ENCODE measurements at regions of chr20 and their contacts with region 1.

Region 1: GRCh38 chr20:14337400-14338171 is at the start of gene FLRT3:
- DNase-seq: peak; percentile 67 to 84
- H3K4me3 ChIP-seq: peak within 1 kb of the TSS; percentile 65
- H3K27ac ChIP-seq: no peak within 1 kb of the TSS
- H3K4me1 ChIP-seq: no peaks in the 10 kb centered on the region
- H3K27me3 ChIP-seq: no peaks in the 10 kb centered on the region
- CTCF ChIP-seq: peak; percentile 80
- total RNA-seq, gene FLRT3: 0.70 and 0.95 TPM in 2 replicates

Region 2: DNA sequence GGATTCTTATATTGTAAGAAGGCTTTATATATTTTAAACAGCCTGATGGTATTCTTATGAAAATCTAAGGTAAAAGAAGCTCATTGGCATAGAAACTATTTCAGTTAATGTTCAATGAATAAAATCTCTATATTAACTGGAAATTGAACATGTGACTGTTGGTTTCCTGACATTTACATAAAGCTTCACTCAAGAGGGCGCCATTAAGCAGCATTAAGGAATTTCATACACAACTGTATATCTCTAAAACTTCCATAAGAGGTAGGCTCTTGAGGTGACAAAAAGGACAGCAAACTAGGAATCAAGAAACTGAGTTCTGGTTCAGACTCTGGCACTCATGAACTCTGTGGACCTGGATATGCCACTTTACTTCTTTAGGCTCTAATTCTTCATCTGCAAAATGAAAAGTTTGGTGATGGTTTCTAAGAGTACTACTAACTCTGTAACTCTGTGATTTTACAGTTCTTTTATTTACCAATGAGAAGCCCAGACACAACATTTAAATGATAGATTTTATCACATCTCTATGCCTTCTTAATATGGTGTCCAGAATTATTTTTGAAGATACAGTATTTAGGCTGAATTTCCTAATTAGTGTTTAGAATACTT is 147.7 kb before region 1 on chr20:
- CTCF ChIA-PET with region 1: no interaction called
- POLR2A ChIA-PET with region 1: no interaction called
- intact Hi-C with region 1: loop called (anchors 2 kb)
- DNase-seq: peak in 1 of 2 experiments; percentile 2
- H3K4me3 ChIP-seq: no peak overlapping the region
- H3K27ac ChIP-seq: no peak overlapping the region
- H3K4me1 ChIP-seq: no peaks in the 10 kb centered on the region
- H3K27me3 ChIP-seq: no peaks in the 10 kb centered on the region
- CTCF ChIP-seq: peak; percentile 61; the same call in 1 of the 2 replicates

Region 3: GRCh38 chr20:14582855-14583254 is 245.3 kb after region 1 on chr20:
- CTCF ChIA-PET with region 1: no interaction called
- POLR2A ChIA-PET with region 1: no interaction called
- intact Hi-C with region 1: loop called (anchors 10 kb)
- DNase-seq: no peak
- H3K4me3 ChIP-seq: no peak overlapping the region
- H3K27ac ChIP-seq: no peak overlapping the region
- H3K4me1 ChIP-seq: peaks cover 13% of the 10 kb centered on the region
- H3K27me3 ChIP-seq: no peaks in the 10 kb centered on the region
- CTCF ChIP-seq: no peak

Region 4: DNA sequence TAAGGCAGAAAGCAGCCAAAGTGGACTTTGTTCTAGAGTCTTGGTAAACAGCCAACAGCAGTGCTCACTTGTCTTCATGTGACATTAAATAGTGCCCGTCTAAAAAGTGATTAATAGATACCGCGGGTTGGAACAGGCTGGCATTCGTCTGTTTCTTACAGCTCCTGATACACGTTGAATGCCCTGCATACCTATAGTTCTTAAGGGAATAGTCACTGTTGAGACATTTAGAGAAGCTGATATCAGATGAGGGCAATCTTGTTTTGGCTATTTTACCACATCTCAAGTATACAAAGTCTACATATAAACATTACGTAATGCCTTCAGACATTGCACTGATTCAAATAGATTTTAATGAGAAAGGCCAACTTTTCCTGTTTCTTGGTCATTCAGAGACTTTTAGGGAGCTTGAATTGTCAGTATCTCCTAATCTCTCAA is 374.7 kb after region 1 on chr20:
- CTCF ChIA-PET with region 1: no interaction called
- POLR2A ChIA-PET with region 1: no interaction called
- intact Hi-C with region 1: loop called (anchors 2 kb)
- DNase-seq: peak; percentile 56 to 86
- H3K4me3 ChIP-seq: no peak overlapping the region
- H3K27ac ChIP-seq: peak overlapping the region; percentile 54
- H3K4me1 ChIP-seq: no peaks in the 10 kb centered on the region
- H3K27me3 ChIP-seq: no peaks in the 10 kb centered on the region
- CTCF ChIP-seq: no peak

Region 5: DNA sequence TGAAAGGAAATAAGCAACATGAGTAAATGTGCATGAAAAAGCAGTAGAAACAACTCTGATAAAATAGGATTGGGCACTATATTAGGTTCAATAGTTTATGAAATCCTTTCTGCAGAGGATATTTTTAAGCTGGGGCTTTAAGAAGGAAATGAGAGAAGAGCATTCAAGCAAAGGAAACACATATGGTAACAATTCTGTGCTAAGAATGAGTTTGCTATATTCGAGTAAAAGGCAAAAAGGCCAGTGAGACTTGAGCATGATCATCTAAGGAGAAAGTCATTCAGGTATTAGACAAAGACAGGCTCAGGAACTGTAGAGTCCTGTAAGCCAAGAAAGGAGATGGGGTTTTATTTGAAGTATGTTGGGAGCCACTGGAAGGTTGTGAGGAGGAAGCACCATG is 386.9 kb after region 1 on chr20:
- CTCF ChIA-PET with region 1: no interaction called
- POLR2A ChIA-PET with region 1: no interaction called
- intact Hi-C with region 1: no loop called
- DNase-seq: no peak
- H3K4me3 ChIP-seq: no peak overlapping the region
- H3K27ac ChIP-seq: no peak overlapping the region
- H3K4me1 ChIP-seq: no peaks in the 10 kb centered on the region
- H3K27me3 ChIP-seq: no peaks in the 10 kb centered on the region
- CTCF ChIP-seq: no peak

Region 6: GRCh38 chr20:14878768-14879697 is 541.4 kb after region 1 on chr20:
- CTCF ChIA-PET with region 1: no interaction called
- POLR2A ChIA-PET with region 1: no interaction called
- intact Hi-C with region 1: loop called (anchors 5 kb)
- DNase-seq: peak in 1 of 2 experiments; percentile 88
- H3K4me3 ChIP-seq: no peak overlapping the region
- H3K27ac ChIP-seq: peak overlapping the region; percentile 93
- H3K4me1 ChIP-seq: peaks cover 7% of the 10 kb centered on the region; the same call in 1 of the 2 replicates
- H3K27me3 ChIP-seq: no peaks in the 10 kb centered on the region
- CTCF ChIP-seq: no peak

Region 7: GRCh38 chr20:14986026-14986655 is 648.6 kb after region 1 on chr20:
- CTCF ChIA-PET with region 1: no interaction called
- POLR2A ChIA-PET with region 1: interaction called, 3 read pairs
- intact Hi-C with region 1: loop called (anchors 2 kb)
- DNase-seq: peak; percentile 73 to 90
- H3K4me3 ChIP-seq: no peak overlapping the region
- H3K27ac ChIP-seq: peak overlapping the region; percentile 60
- H3K4me1 ChIP-seq: peaks cover 19% of the 10 kb centered on the region
- H3K27me3 ChIP-seq: no peaks in the 10 kb centered on the region
- CTCF ChIP-seq: no peak

Region 8: DNA sequence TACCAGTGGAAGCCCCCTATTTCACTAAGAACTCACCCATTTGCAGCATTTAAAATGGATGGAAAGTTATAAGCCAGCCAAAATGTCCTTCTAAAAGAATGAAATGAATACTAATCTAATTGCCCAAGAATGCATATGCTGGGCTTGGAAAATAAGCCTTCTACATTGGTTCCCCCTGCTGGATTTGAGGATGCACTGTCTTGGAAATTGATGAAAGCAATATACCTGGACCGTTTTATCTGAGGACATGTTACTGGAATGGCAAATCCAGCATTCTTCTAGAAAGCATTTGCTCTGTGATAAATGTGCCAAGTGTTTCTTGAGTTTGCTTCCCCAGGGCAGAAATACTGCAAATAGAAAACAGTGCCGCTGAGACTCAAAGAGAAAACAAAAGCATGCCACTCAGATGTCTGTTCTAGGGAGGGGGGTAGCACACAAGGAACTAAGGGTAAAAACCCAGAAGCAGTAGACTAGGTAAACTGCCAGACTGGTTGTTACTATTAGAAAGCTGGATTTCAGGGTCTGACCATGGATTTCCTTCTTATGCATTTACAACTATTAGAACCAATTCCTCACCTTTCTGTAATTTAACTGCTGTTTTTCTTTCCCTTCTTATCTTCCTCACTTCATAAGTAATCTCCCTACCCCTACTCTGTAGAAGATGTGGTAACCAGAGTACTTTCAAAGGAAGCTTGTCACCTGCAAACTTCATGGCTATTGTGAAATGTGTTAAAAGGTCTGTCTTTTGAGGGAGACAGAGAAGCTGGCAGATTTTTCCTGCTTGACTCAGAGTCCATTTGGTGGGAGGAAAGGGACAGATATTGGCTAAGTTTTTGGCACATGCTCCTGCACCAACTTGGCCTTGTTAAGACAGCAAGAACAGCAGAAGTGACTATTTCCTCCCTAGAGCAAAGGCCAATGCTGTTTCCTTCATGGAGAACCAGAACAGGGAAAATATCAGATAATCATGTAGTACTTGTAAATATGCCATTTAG is 1593.0 kb after region 1 on chr20:
- CTCF ChIA-PET with region 1: no interaction called
- POLR2A ChIA-PET with region 1: no interaction called
- intact Hi-C with region 1: loop called (anchors 2 kb)
- DNase-seq: peak in 1 of 2 experiments; percentile 95
- H3K4me3 ChIP-seq: no peak overlapping the region
- H3K27ac ChIP-seq: no peak overlapping the region
- H3K4me1 ChIP-seq: peaks cover 27% of the 10 kb centered on the region
- H3K27me3 ChIP-seq: no peaks in the 10 kb centered on the region
- CTCF ChIP-seq: peak; percentile 80